ENCODE measurements at regions of chr3 and their contacts with region 1.

Region 1: DNA sequence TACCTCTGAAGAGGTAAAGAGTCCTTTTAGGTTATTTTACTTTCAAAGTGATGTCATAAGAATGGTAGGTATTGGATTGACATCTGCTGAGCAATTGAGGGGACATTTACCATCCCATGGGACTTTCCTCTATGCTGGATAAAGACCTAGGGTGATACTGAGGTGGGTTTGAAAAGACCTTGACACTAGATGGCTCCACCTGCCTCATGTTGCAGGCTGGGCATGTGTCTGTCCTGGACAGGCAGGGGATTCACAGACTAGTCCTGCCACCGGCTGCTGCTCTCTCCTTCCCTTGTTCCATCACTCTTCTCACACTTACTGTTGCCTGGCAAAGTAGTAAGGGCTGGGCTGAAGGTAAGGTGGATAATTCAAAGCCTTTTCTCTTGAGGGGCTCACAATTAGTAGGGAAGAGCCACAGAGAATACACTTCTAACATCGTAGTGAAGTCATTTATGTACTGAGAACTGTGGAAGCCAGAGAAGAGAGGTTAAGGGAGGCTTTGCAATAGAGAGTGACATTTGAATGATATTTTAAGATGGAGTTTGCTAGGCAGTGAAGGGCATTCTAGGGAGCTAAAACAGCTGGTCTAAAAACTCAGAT is 27.7 kb downstream of the TRAK1 start:
- DNase-seq: no peak
- H3K4me3 ChIP-seq: no peak overlapping the region
- H3K27ac ChIP-seq: peak overlapping the region; percentile 10
- H3K4me1 ChIP-seq: peaks cover 83% of the 10 kb centered on the region
- H3K27me3 ChIP-seq: no peaks in the 10 kb centered on the region
- CTCF ChIP-seq: peak; percentile 33 to 88 (median 59)

Region 2: DNA sequence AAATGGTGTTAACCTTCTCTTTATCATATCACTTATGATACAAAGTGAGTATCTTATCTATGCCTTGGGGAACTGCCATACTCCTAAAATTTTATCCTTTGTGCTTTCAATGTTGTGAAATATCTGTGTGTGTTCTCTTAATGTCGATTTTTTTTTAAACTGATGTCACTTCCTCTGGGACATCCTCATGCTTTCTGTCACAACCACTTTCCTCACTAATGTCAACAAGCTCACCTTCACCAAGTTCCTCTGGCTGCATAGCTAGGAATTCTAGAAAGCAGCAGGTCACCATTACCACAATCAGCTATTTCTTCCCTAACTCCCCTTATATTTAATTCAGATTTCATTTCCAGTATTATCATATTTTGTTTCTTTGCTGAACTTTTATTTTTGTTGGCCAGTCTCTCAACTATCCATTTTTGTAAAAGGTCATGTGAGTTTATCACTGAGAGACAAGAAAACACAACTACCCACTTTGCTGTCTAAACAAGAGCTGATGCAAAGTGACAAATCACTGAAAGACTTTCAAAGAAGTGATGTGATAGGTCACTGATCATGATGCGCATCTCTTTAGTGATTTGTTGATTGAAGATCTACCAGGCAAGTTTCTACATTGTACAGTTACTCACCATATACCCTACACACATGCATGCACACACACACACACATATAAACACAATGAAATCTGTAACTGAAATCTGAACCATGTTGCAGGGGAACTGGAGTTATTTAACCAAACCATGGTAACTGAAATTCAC is 525.9 kb before region 1 on chr3:
- dilution Hi-C with region 1: no loop called
- DNase-seq: no peak
- H3K4me3 ChIP-seq: no peak overlapping the region
- H3K27ac ChIP-seq: no peak overlapping the region
- H3K4me1 ChIP-seq: no peaks in the 10 kb centered on the region
- H3K27me3 ChIP-seq: no peaks in the 10 kb centered on the region
- CTCF ChIP-seq: no peak

Region 3: GRCh38 chr3:41900265-41900664 is 218.6 kb before region 1 on chr3:
- dilution Hi-C with region 1: loop called (anchors 25 kb)
- DNase-seq: no peak
- H3K4me3 ChIP-seq: no peak overlapping the region
- H3K27ac ChIP-seq: no peak overlapping the region
- H3K4me1 ChIP-seq: no peaks in the 10 kb centered on the region
- H3K27me3 ChIP-seq: no peaks in the 10 kb centered on the region
- CTCF ChIP-seq: no peak

Region 4: GRCh38 chr3:42190701-42191462 is 72.0 kb after region 1 on chr3:
- dilution Hi-C with region 1: loop called (anchors 10 kb)
- DNase-seq: no peak
- H3K4me3 ChIP-seq: no peak overlapping the region
- H3K27ac ChIP-seq: no peak overlapping the region
- H3K4me1 ChIP-seq: no peaks in the 10 kb centered on the region
- H3K27me3 ChIP-seq: no peaks in the 10 kb centered on the region
- CTCF ChIP-seq: peak; percentile 85 to 93 (median 86)